WTC11 (cell line): ENCODE measurements at regions of chr15 and their contacts with region 1.

Region 1: GRCh38 chr15:64274341-64274950 is 81.5 kb downstream of the CSNK1G1 start:
- DNase-seq: no peak
- ATAC-seq: no peak
- H3K4me3 Mint-ChIP-seq: no peak overlapping the region
- H3K27ac Mint-ChIP-seq: no peak overlapping the region
- H3K4me1 Mint-ChIP-seq: no peaks in the 10 kb centered on the region
- H3K27me3 Mint-ChIP-seq: no peaks in the 10 kb centered on the region
- CTCF ChIP-seq: no peak

Region 2: DNA sequence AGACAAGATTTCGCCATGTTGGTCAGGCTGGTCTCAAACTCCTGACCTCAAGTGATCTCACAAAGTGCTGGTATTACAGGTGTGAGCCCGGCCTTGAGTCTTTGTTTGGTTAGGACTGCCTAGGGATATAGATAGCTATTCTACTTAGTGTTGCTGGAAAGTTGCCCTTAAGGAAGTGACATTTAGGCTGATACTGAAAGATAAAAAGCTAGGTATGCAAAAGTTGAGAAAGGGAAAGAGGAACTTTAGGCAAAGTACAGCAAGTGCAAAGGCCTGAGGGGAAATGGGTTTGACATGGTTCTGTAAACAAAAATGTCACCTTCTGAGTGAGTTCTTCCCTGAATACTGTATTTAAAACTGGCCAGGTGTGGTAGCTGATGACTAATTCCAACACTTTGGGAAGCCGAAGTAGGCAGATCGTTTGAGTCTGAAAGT is 297.4 kb after region 1 on chr15:
- CTCF ChIA-PET with region 1: no interaction called
- POLR2A ChIA-PET with region 1: interaction called, 12 read pairs
- DNase-seq: no peak
- ATAC-seq: no peak
- H3K4me3 Mint-ChIP-seq: no peak overlapping the region
- H3K27ac Mint-ChIP-seq: peak overlapping the region; percentile 68
- H3K4me1 Mint-ChIP-seq: peaks cover 32% of the 10 kb centered on the region
- H3K27me3 Mint-ChIP-seq: no peaks in the 10 kb centered on the region
- CTCF ChIP-seq: no peak